PC-9 (cell line): ENCODE measurements at regions of chr17 and their contacts with region 1.

Region 1: DNA sequence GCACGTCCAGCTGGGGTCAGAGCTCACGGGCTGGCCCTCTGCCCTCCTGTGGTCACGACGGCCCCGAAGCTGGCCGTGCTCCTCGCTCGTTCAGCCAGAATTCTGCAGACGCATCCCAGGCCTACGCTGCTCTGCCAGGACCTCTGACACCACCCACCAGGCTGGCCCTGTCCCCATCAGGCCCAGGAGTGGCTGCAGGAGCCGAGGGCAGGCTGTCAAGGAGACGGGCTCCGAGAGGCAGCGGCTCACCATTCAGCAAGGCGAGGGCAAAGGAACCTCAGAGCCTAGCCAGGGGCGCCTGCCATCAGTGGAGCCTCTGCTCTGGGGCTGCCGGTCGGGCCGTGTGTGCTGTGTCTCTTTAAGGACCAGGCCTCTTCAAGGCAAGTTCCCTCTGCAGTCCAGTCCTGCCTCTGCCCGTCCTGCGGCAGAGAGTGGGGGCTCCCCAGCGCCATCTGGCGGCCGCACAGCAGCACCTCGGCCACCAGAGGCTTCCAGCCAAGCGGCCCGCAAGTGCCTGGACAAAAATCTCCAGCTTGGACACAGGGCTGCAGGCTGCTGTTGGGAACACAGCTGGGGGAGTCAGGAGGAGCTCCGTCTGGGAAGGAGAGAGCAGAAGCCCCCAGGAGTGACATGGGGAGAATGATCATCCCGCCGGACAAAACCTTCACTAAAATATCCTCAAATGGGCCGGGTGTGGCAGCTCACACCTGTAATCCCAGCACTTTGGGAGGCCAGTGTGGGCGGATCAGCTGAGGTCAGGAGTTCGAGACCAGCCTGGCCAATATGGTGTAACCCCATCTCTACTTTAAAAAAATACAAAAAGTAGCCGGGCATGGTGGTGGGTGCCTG is 7.4 kb upstream of the ABR start:
- DNase-seq: peak; percentile 63 to 87
- H3K4me3 ChIP-seq: no peak overlapping the region
- H3K27ac ChIP-seq: no peak overlapping the region
- H3K4me1 ChIP-seq: no peaks in the 10 kb centered on the region
- H3K27me3 ChIP-seq: peaks cover 14% of the 10 kb centered on the region; the same call in 1 of the 2 replicates
- CTCF ChIP-seq: peak; percentile 98

Region 2: DNA sequence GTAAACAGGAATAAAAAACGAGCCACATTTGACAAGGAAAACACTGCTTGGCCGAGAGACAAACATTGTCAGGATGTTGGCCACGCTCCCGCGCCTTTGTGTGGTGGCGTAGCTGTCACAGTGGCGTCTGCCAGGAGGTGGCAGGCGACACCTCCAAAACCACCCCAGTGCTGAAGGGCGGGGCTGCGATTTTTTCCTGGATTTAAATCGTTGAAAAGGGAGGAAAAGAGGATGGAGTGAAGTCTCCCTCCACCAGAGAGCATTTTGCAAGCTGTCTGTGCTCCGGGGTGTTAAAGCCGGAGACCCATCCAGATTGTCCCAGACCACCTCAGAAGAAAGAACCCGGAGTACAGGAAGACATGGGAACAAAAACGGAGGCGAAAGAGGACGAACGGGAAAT is 392.3 kb before region 1 on chr17:
- CTCF ChIA-PET with region 1: no interaction called
- POLR2A ChIA-PET with region 1: no interaction called
- intact Hi-C with region 1: loop called (anchors 5 kb)
- DNase-seq: peak; percentile 42 to 54
- H3K4me3 ChIP-seq: no peak overlapping the region
- H3K27ac ChIP-seq: no peak overlapping the region
- H3K4me1 ChIP-seq: no peaks in the 10 kb centered on the region
- H3K27me3 ChIP-seq: no peaks in the 10 kb centered on the region
- CTCF ChIP-seq: peak; percentile 82

Region 3: GRCh38 chr17:1650731-1651558 is 463.8 kb after region 1 on chr17:
- CTCF ChIA-PET with region 1: no interaction called
- POLR2A ChIA-PET with region 1: no interaction called
- intact Hi-C with region 1: no loop called
- DNase-seq: no peak
- H3K4me3 ChIP-seq: no peak overlapping the region
- H3K27ac ChIP-seq: no peak overlapping the region
- H3K4me1 ChIP-seq: peaks cover 24% of the 10 kb centered on the region
- H3K27me3 ChIP-seq: no peaks in the 10 kb centered on the region
- CTCF ChIP-seq: no peak